IMR-90 (cell line): ENCODE measurements at regions of chr19 and their contacts with region 1.

Region 1: GRCh38 chr19:7349961-7350711 is 1.4 kb downstream of the ARHGEF18 start:
- DNase-seq: no peak
- ATAC-seq: no peak
- H3K4me3 ChIP-seq: no peak overlapping the region
- H3K27ac ChIP-seq: no peak overlapping the region
- H3K4me1 ChIP-seq: no peaks in the 10 kb centered on the region
- H3K27me3 ChIP-seq: peaks cover 2% of the 10 kb centered on the region
- CTCF ChIP-seq: no peak
- POLR2A ChIP-seq: no peak
- RAD21 ChIP-seq: no peak

Region 2: GRCh38 chr19:7376151-7376852 is 26.2 kb after region 1 on chr19:
- CTCF ChIA-PET with region 1: no interaction called
- POLR2A ChIA-PET with region 1: no interaction called
- dilution Hi-C with region 1: no loop called
- in situ Hi-C with region 1: no loop called
- intact Hi-C with region 1: loop called (anchors 1 kb)
- DNase-seq: no peak
- ATAC-seq: no peak
- H3K4me3 ChIP-seq: no peak overlapping the region
- H3K27ac ChIP-seq: no peak overlapping the region
- H3K4me1 ChIP-seq: no peaks in the 10 kb centered on the region
- H3K27me3 ChIP-seq: no peaks in the 10 kb centered on the region; the same call in 1 of the 2 replicates
- CTCF ChIP-seq: no peak
- POLR2A ChIP-seq: no peak
- RAD21 ChIP-seq: no peak

Region 3: DNA sequence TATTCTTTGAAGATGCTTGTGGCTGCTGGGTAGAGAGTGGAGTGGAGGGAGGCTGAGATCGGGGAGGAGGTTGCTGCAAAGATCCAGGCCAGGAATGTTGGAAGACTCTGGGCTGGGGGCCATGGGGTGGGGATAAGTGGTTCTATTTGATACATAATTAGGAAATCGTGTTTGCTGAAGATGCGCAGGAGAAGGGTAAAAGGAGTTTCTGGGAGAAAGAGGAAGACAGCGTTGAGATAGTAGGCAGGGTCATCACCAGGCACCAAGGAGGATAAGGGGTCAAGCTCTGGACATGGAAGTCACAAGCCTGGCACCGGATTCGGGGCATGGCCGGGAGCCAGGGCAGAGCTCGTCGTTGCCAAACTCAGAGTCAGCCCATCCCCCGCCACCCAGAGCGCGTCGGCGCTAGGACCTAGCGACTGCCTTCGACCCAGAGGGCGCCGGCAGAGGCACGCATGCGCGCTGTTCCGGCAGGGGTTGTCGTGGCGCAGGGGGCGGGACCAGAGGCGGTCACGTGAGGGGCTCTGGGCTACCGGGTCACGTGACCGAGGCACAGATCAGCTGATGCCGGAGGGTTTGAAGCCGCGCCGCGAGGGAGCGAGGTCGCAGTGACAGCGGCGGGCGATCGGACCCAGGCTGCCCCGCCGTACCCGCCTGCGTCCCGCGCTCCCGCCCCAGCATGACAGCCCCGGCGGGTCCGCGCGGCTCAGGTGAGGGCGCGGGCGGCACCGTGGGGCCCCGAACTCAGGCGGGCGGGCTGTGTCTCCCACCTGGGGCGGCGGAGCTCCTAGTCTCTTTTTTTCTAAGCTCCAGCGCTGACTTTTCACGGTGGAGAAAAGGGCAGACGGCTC is 172.2 kb after region 1 on chr19 and contains the start of gene MCOLN1:
- CTCF ChIA-PET with region 1: interaction called, 3 read pairs
- POLR2A ChIA-PET with region 1: no interaction called
- dilution Hi-C with region 1: no loop called
- in situ Hi-C with region 1: no loop called
- intact Hi-C with region 1: loop called (anchors 1 kb)
- DNase-seq: peak; percentile 94
- ATAC-seq: peak; percentile 97
- H3K4me3 ChIP-seq: peak within 1 kb of the TSS; percentile 59
- H3K27ac ChIP-seq: peak within 1 kb of the TSS; percentile 83
- H3K4me1 ChIP-seq: peaks cover 2% of the 10 kb centered on the region; the same call in 1 of the 2 replicates
- H3K27me3 ChIP-seq: no peaks in the 10 kb centered on the region
- CTCF ChIP-seq: no peak
- POLR2A ChIP-seq: no peak; the same call in 1 of the 2 replicates
- RAD21 ChIP-seq: no peak; the same call in 1 of the 2 replicates
- total RNA-seq, gene MCOLN1: 2.5 and 3.4 TPM in 2 replicates

Region 4: DNA sequence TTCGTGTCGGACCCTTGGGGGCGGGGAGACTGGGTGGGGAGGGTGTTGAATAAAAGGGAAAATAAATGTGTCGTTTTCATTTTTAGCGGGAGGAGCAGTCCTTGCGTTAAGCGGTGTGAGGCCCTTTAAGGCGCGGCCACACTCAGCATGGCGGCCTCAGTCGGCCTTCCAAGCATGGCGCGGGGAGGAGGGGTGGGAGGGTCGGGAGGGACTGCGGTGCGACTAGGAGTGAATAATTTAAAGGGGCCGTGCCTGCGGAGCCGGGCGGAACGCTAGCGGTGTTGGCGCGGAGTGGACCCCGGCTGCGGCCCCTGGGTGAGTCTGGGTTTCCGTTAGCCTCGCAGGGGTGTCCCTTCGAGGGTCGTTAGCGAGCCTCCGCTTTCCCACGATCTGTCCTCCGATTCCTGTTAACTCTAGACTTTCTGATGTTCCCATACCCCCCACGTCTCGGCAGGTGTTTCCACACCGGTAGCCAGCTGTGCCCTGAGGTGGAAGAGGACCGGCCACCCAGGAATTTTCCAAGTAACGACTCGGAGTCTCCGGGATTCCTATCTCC is 183.9 kb after region 1 on chr19:
- CTCF ChIA-PET with region 1: interaction called, 9 read pairs
- POLR2A ChIA-PET with region 1: no interaction called
- dilution Hi-C with region 1: no loop called
- in situ Hi-C with region 1: no loop called
- intact Hi-C with region 1: loop called (anchors 1 kb)
- DNase-seq: peak; percentile 85
- ATAC-seq: peak; percentile 67
- H3K4me3 ChIP-seq: peak overlapping the region; percentile 55
- H3K27ac ChIP-seq: peak overlapping the region; percentile 95
- H3K4me1 ChIP-seq: peaks cover 10% of the 10 kb centered on the region
- H3K27me3 ChIP-seq: no peaks in the 10 kb centered on the region
- CTCF ChIP-seq: no peak
- POLR2A ChIP-seq: no peak
- RAD21 ChIP-seq: no peak

Region 5: DNA sequence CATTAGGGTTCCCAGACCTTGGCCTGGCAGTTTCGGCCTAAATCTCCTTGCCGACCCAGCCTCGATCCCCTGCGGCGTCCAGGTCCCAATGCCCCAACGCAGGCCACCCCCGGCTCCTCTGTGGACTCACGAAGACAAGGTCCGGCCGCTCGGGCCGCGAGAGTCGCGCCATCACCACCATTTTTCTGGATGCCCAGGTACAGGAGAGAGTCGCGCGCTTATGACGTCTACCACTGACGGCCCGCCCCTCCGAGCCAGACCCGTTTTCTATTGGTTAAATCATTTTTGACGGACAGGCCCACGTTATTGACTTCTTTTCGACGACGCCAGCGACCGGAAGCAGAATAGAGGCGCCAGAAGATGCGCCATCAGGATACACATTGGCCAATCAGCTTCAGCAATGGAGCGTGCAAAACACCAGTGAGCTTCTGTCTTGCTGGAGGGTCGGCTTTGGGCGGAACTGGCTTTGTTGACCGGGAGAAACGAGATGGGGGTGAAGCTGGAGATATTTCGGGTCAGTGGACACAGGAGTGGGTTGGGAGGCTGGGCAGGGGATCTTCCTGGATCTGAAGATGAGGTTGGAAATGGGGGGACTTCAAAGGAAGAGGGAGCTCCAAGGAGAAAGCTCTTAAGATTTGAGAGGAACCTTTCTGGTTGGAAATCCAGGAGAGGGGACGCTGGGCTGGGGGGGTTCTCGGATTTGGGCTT is 279.4 kb after region 1 on chr19 and contains the starts of genes PET100 and XAB2:
- CTCF ChIA-PET with region 1: no interaction called
- POLR2A ChIA-PET with region 1: no interaction called
- dilution Hi-C with region 1: no loop called
- in situ Hi-C with region 1: no loop called
- intact Hi-C with region 1: loop called (anchors 1 kb)
- DNase-seq: peak; percentile 99
- ATAC-seq: peak; percentile 97
- H3K4me3 ChIP-seq: peak within 1 kb of the TSS; percentile 70
- H3K27ac ChIP-seq: peak within 1 kb of the TSS; percentile 47
- H3K4me1 ChIP-seq: peaks cover 8% of the 10 kb centered on the region; the same call in 1 of the 2 replicates
- H3K27me3 ChIP-seq: no peaks in the 10 kb centered on the region
- CTCF ChIP-seq: no peak
- POLR2A ChIP-seq: peak; percentile 89
- RAD21 ChIP-seq: no peak
- total RNA-seq, gene PET100: 1.4 and 5.3 TPM in 2 replicates
- total RNA-seq, gene XAB2: 28.1 and 29.9 TPM in 2 replicates

Region 6: DNA sequence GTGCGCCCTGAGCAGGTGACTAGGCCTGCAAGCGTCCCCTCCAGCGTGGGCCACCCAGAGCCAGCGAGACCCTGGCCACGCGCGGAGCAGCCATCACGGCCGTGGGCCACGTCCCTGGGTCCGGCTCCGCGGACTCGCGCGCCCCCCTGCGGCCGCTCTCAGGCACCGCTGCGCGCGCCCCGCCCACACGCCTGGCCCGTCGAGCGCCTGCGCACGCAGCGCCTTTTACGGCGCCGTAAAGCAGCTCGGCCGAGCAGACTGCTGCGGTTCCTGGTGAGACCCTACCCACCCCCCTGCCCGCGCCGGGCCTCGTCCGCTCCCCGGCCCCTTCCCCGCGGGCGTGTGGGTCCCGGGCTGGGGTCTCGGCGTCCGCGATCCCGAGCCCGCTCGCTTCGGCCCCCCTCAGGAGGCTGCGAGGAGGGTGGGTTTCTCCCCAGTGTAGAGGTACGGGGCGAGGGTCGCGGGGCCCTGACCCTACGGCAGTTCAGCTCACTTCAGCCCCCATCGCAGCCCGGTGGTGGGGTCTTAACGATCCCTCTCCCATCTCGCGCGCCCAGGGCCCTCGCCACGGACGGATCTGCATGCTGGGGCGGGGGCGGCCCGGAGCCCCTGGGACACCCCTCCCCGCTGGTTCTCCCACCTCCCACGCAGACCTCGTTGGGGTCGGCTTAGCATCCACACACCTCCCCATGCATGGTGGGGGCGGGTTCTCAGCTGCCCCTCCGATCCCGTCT is 330.6 kb after region 1 on chr19 and contains the start of gene TRAPPC5:
- CTCF ChIA-PET with region 1: interaction called, 6 read pairs
- POLR2A ChIA-PET with region 1: no interaction called
- dilution Hi-C with region 1: no loop called
- in situ Hi-C with region 1: no loop called
- intact Hi-C with region 1: loop called (anchors 1 kb)
- DNase-seq: peak; percentile 76
- ATAC-seq: peak; percentile 93
- H3K4me3 ChIP-seq: peak within 1 kb of the TSS; percentile 87
- H3K27ac ChIP-seq: peak within 1 kb of the TSS; percentile 86
- H3K4me1 ChIP-seq: peaks cover 4% of the 10 kb centered on the region; the same call in 1 of the 2 replicates
- H3K27me3 ChIP-seq: peaks cover 8% of the 10 kb centered on the region
- CTCF ChIP-seq: peak; percentile 97
- POLR2A ChIP-seq: no peak
- RAD21 ChIP-seq: peak; percentile 83
- total RNA-seq, gene TRAPPC5: 54.7 and 73.0 TPM in 2 replicates